Esophagus squamous epithelium (tissue), 5 donors: ENCODE measurements at regions of chr3 and their contacts with region 1.

Region 1: GRCh38 chr3:133040696-133041523 is 2.7 kb downstream of the TMEM108 start:
- DNase-seq: no peak
- H3K4me3 ChIP-seq: peak overlapping the region in 1 of 4 donors; percentile 19
- H3K27ac ChIP-seq: peak overlapping the region in 3 of 4 donors; percentile 31 to 42 (median 39)
- H3K4me1 ChIP-seq: peaks cover 6 to 29% (median 8%) of the 10 kb centered on the region in 3 donors
- H3K27me3 ChIP-seq: peaks cover 0 to 46% (median 3%) of the 10 kb centered on the region in 4 donors
- CTCF ChIP-seq: peak; percentile 58 to 76 (median 70)
- POLR2A ChIP-seq: no peak

Region 2: GRCh38 chr3:133384331-133385027 is 343.6 kb after region 1 on chr3:
- intact Hi-C with region 1: loop called (anchors 10 kb)
- DNase-seq: no peak
- H3K4me3 ChIP-seq: no peak overlapping the region
- H3K27ac ChIP-seq: no peak overlapping the region
- H3K4me1 ChIP-seq: peaks cover 0 to 18% (median 4%) of the 10 kb centered on the region in 3 donors
- H3K27me3 ChIP-seq: no peaks in the 10 kb centered on the region
- CTCF ChIP-seq: peak in 5 of 6 experiments; percentile 60 to 71 (median 67)
- POLR2A ChIP-seq: no peak

Region 3: DNA sequence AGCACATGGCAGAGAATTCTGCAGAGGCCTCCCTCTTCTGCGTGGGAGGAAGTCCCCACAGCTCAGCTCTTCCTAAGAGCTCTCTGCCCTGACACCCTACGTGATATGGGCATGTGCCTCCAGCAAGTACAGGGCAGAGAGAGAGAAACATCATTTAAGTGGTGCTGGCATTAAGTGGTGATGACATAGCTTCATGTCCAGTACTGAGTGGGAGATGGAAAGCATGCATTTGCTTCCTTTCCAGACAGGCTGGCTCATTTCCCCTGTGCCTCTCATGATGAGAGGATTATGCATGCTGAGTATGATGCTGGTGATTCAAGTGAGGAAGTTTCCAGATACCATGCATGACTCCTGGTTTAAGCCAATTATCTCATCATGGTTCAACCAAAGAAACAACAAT is 385.8 kb after region 1 on chr3:
- intact Hi-C with region 1: loop called (anchors 5 kb)
- DNase-seq: no peak
- H3K4me3 ChIP-seq: no peak overlapping the region
- H3K27ac ChIP-seq: no peak overlapping the region
- H3K4me1 ChIP-seq: peaks cover 0 to 18% (median 0%) of the 10 kb centered on the region in 3 donors
- H3K27me3 ChIP-seq: peaks cover 0 to 18% (median 0%) of the 10 kb centered on the region in 4 donors
- CTCF ChIP-seq: no peak
- POLR2A ChIP-seq: no peak